ENCODE measurements at regions of chr19 and their contacts with region 1.

Region 1: GRCh38 chr19:506404-507285 is 652 bp upstream of the TPGS1 start:
- DNase-seq: peak; percentile 91
- ATAC-seq: peak; percentile 70
- H3K4me3 Mint-ChIP-seq: peak overlapping the region; percentile 95
- H3K27ac Mint-ChIP-seq: peak overlapping the region; percentile 100
- H3K4me1 Mint-ChIP-seq: peaks cover 44% of the 10 kb centered on the region
- H3K27me3 Mint-ChIP-seq: no peaks in the 10 kb centered on the region
- CTCF ChIP-seq: peak; percentile 70

Region 2: DNA sequence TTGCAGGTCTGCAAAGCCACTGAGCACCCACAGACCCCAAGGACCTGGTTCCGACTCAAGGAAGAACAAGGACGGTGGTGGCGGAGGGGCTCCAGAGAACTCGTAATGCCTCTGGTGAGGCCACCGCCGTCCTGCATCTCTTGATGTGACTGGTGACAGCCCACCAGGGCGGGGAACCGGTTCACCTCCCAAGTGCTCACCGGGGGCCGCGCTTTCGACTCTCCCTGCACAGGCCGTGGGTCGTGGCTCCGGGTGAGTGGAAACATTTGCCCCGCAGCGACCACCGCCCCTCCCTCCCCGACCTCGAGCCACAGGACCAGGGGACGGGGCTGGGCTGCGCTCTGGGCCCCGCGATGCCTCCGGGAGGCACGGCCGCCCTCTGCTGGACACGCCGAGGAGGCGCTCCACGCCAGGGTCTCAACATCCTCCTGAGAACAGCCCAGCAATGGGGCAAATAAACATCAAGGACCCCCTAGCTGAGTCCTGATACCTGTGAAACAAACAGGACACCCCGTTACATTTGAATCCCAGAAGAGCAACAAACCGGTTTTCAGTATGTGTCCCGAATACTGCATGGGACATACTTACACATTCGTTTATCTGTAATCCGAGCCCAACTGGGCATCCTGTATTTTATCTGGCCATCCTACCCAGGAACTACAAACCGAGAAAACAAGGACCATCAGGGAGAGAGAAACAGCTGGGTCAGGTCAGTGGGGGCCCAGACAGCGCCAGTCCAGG is 211.5 kb before region 1 on chr19:
- CTCF ChIA-PET with region 1: interaction called, 3 read pairs
- POLR2A ChIA-PET with region 1: no interaction called
- intact Hi-C with region 1: loop called (anchors 10 kb)
- DNase-seq: peak; percentile 38
- ATAC-seq: peak; percentile 68
- H3K4me3 Mint-ChIP-seq: no peak overlapping the region
- H3K27ac Mint-ChIP-seq: no peak overlapping the region
- H3K4me1 Mint-ChIP-seq: peaks cover 7% of the 10 kb centered on the region
- H3K27me3 Mint-ChIP-seq: peaks cover 31% of the 10 kb centered on the region
- CTCF ChIP-seq: no peak

Region 3: GRCh38 chr19:344625-345319 is 161.9 kb before region 1 on chr19 and contains the start of gene MIER2:
- CTCF ChIA-PET with region 1: interaction called, 4 read pairs
- POLR2A ChIA-PET with region 1: no interaction called
- intact Hi-C with region 1: loop called (anchors 10 kb)
- DNase-seq: peak; percentile 98
- ATAC-seq: peak; percentile 96
- H3K4me3 Mint-ChIP-seq: peak within 1 kb of the TSS; percentile 85
- H3K27ac Mint-ChIP-seq: peak within 1 kb of the TSS; percentile 74
- H3K4me1 Mint-ChIP-seq: peaks cover 49% of the 10 kb centered on the region
- H3K27me3 Mint-ChIP-seq: no peaks in the 10 kb centered on the region
- CTCF ChIP-seq: no peak
- total RNA-seq, gene MIER2: 14.6 and 15.0 TPM in 2 replicates

Region 4: GRCh38 chr19:488505-489417 is 17.9 kb before region 1 on chr19:
- CTCF ChIA-PET with region 1: interaction called, 16 read pairs
- POLR2A ChIA-PET with region 1: interaction called, 47 read pairs
- intact Hi-C with region 1: loop called (anchors 1 kb)
- DNase-seq: peak; percentile 96
- ATAC-seq: peak; percentile 94
- H3K4me3 Mint-ChIP-seq: peak overlapping the region; percentile 85
- H3K27ac Mint-ChIP-seq: peak overlapping the region; percentile 88
- H3K4me1 Mint-ChIP-seq: peaks cover 11% of the 10 kb centered on the region
- H3K27me3 Mint-ChIP-seq: peaks cover 10% of the 10 kb centered on the region
- CTCF ChIP-seq: no peak

Region 5: GRCh38 chr19:531009-531752 is 24.5 kb after region 1 on chr19:
- CTCF ChIA-PET with region 1: interaction called, 11 read pairs
- POLR2A ChIA-PET with region 1: interaction called, 23 read pairs
- intact Hi-C with region 1: loop called (anchors 1 kb)
- DNase-seq: peak; percentile 99
- ATAC-seq: peak; percentile 81
- H3K4me3 Mint-ChIP-seq: peak overlapping the region; percentile 85
- H3K27ac Mint-ChIP-seq: peak overlapping the region; percentile 77
- H3K4me1 Mint-ChIP-seq: peaks cover 18% of the 10 kb centered on the region
- H3K27me3 Mint-ChIP-seq: peaks cover 1% of the 10 kb centered on the region
- CTCF ChIP-seq: no peak

Region 6: GRCh38 chr19:572140-572742 is 65.6 kb after region 1 on chr19 and contains the start of gene BSG:
- CTCF ChIA-PET with region 1: interaction called, 3 read pairs
- POLR2A ChIA-PET with region 1: interaction called, 3 read pairs
- intact Hi-C with region 1: loop called (anchors 2 kb)
- DNase-seq: peak; percentile 98
- ATAC-seq: peak; percentile 82
- H3K4me3 Mint-ChIP-seq: peak within 1 kb of the TSS; percentile 97
- H3K27ac Mint-ChIP-seq: peak within 1 kb of the TSS; percentile 99
- H3K4me1 Mint-ChIP-seq: peaks cover 36% of the 10 kb centered on the region
- H3K27me3 Mint-ChIP-seq: no peaks in the 10 kb centered on the region
- CTCF ChIP-seq: no peak
- total RNA-seq, gene BSG: 150 and 152 TPM in 2 replicates

Region 7: DNA sequence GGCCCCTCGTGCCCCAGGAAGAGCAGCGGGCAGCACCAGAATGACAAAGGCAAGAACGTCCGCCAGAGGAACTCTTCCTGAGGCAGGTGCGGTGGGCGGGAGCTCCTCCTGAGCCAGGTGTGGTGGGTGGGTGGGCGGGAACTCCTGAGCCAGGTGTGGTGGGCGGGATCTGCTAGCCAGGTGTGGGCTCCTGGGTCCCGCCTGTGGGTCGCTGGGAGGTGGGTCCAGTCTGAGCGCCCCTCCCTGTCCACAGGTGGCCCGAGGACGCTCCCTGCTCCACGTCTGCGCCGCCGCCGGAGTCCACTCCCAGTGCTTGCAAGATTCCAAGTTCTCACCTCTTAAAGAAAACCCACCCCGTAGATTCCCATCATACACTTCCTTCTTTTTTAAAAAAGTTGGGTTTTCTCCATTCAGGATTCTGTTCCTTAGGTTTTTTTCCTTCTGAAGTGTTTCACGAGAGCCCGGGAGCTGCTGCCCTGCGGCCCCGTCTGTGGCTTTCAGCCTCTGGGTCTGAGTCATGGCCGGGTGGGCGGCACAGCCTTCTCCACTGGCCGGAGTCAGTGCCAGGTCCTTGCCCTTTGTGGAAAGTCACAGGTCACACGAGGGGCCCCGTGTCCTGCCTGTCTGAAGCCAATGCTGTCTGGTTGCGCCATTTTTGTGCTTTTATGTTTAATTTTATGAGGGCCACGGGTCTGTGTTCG is 76.0 kb after region 1 on chr19:
- CTCF ChIA-PET with region 1: no interaction called
- POLR2A ChIA-PET with region 1: no interaction called
- intact Hi-C with region 1: no loop called
- DNase-seq: no peak
- ATAC-seq: no peak
- H3K4me3 Mint-ChIP-seq: no peak overlapping the region
- H3K27ac Mint-ChIP-seq: no peak overlapping the region
- H3K4me1 Mint-ChIP-seq: no peaks in the 10 kb centered on the region
- H3K27me3 Mint-ChIP-seq: peaks cover 2% of the 10 kb centered on the region
- CTCF ChIP-seq: no peak

Region 8: DNA sequence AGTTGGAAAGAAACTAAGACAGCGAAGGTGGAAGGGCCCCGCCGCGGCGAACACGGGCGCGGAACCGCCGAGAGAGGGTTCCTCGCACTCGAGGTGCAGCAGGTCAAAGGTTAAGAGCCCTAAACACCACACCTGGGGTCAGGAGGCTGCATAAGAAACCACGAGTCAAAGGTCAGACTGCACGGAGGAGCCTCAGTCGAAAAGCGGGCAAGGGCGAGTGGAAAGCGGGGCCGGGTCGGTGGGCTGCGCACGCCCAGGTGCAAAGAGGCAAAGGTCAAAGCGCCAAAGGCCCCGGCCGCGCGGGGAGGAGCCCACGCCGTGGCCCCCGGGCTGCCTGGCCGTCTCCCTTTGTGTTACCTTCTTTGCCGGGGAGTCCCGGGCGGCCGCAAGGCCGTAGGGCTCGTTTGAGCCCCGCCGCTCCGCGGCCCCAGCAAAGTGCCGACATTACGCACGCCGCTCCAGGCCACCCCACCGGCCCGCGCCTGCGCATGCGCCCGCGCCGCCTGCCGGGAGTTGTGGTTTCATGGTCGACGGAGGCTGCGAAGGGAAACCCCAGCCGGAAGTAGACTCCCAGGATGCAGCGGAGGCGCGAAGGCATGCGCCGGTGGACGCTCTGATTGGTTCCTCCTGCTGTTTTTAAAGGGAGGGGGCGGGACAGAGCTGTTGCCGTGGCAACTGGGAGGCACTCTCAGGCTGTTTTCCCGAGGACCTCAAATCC is 126.6 kb after region 1 on chr19 and contains the start of gene POLRMT:
- CTCF ChIA-PET with region 1: no interaction called
- POLR2A ChIA-PET with region 1: interaction called, 4 read pairs
- intact Hi-C with region 1: loop called (anchors 5 kb)
- DNase-seq: peak; percentile 93
- ATAC-seq: peak; percentile 89
- H3K4me3 Mint-ChIP-seq: peak within 1 kb of the TSS; percentile 95
- H3K27ac Mint-ChIP-seq: peak within 1 kb of the TSS; percentile 93
- H3K4me1 Mint-ChIP-seq: peaks cover 36% of the 10 kb centered on the region
- H3K27me3 Mint-ChIP-seq: no peaks in the 10 kb centered on the region
- CTCF ChIP-seq: no peak
- total RNA-seq, gene POLRMT: 54.7 and 58.2 TPM in 2 replicates

Region 9: GRCh38 chr19:656751-657559 is 150.3 kb after region 1 on chr19:
- CTCF ChIA-PET with region 1: no interaction called
- POLR2A ChIA-PET with region 1: no interaction called
- intact Hi-C with region 1: no loop called
- DNase-seq: no peak
- ATAC-seq: no peak
- H3K4me3 Mint-ChIP-seq: no peak overlapping the region
- H3K27ac Mint-ChIP-seq: no peak overlapping the region
- H3K4me1 Mint-ChIP-seq: peaks cover 51% of the 10 kb centered on the region
- H3K27me3 Mint-ChIP-seq: no peaks in the 10 kb centered on the region
- CTCF ChIP-seq: no peak

Region 10: GRCh38 chr19:850221-850978 is 343.8 kb after region 1 on chr19:
- CTCF ChIA-PET with region 1: no interaction called
- POLR2A ChIA-PET with region 1: no interaction called
- intact Hi-C with region 1: no loop called
- DNase-seq: no peak
- ATAC-seq: no peak
- H3K4me3 Mint-ChIP-seq: no peak overlapping the region
- H3K27ac Mint-ChIP-seq: no peak overlapping the region
- H3K4me1 Mint-ChIP-seq: peaks cover 5% of the 10 kb centered on the region
- H3K27me3 Mint-ChIP-seq: peaks cover 35% of the 10 kb centered on the region
- CTCF ChIP-seq: no peak